B cell (primary cell): ENCODE measurements at regions of chr3 and their contacts with region 1.

Region 1: GRCh38 chr3:193665370-193665989 is 72.5 kb downstream of the OPA1 start:
- DNase-seq: peak; percentile 60
- ATAC-seq: no peak
- H3K4me3 ChIP-seq: no peak overlapping the region
- H3K4me3 Mint-ChIP-seq: no peak overlapping the region
- H3K27ac ChIP-seq: no peak overlapping the region
- H3K27ac Mint-ChIP-seq: no peak overlapping the region
- H3K4me1 ChIP-seq: no peaks in the 10 kb centered on the region
- H3K4me1 Mint-ChIP-seq: peaks cover 7% of the 10 kb centered on the region
- H3K27me3 ChIP-seq: no peaks in the 10 kb centered on the region
- H3K27me3 Mint-ChIP-seq: no peaks in the 10 kb centered on the region
- CTCF ChIP-seq: peak; percentile 86

Region 2: GRCh38 chr3:193780810-193781472 is 115.5 kb after region 1 on chr3:
- CTCF ChIA-PET with region 1: interaction called, 13 read pairs
- POLR2A ChIA-PET with region 1: no interaction called
- intact Hi-C with region 1: loop called (anchors 2 kb)
- DNase-seq: peak; percentile 63
- ATAC-seq: peak; percentile 45
- H3K4me3 ChIP-seq: no peak overlapping the region
- H3K4me3 Mint-ChIP-seq: no peak overlapping the region
- H3K27ac ChIP-seq: no peak overlapping the region
- H3K27ac Mint-ChIP-seq: no peak overlapping the region
- H3K4me1 ChIP-seq: peaks cover 12% of the 10 kb centered on the region in 2 donors
- H3K4me1 Mint-ChIP-seq: peaks cover 12% of the 10 kb centered on the region
- H3K27me3 ChIP-seq: peaks cover 0 to 61% (median 28%) of the 10 kb centered on the region in 4 experiments
- H3K27me3 Mint-ChIP-seq: peaks cover 59% of the 10 kb centered on the region
- CTCF ChIP-seq: peak; percentile 59

Region 3: GRCh38 chr3:193788189-193788991 is 122.9 kb after region 1 on chr3:
- CTCF ChIA-PET with region 1: interaction called, 12 read pairs
- POLR2A ChIA-PET with region 1: no interaction called
- intact Hi-C with region 1: no loop called
- DNase-seq: peak; percentile 79
- ATAC-seq: peak; percentile 88
- H3K4me3 ChIP-seq: no peak overlapping the region
- H3K4me3 Mint-ChIP-seq: no peak overlapping the region
- H3K27ac ChIP-seq: no peak overlapping the region
- H3K27ac Mint-ChIP-seq: peak overlapping the region; percentile 57
- H3K4me1 ChIP-seq: peaks cover 12 to 17% of the 10 kb centered on the region in 2 donors
- H3K4me1 Mint-ChIP-seq: peaks cover 14% of the 10 kb centered on the region
- H3K27me3 ChIP-seq: peaks cover 0 to 44% (median 5%) of the 10 kb centered on the region in 4 experiments
- H3K27me3 Mint-ChIP-seq: peaks cover 54% of the 10 kb centered on the region
- CTCF ChIP-seq: peak; percentile 82

Region 4: GRCh38 chr3:194141415-194142155 is 476.1 kb after region 1 on chr3:
- CTCF ChIA-PET with region 1: interaction called, 121 read pairs
- POLR2A ChIA-PET with region 1: no interaction called
- intact Hi-C with region 1: loop called (anchors 1 kb)
- DNase-seq: peak; percentile 75
- ATAC-seq: peak; percentile 20
- H3K4me3 ChIP-seq: peak overlapping the region in 4 of 5 experiments; percentile 2 to 52 (median 52)
- H3K4me3 Mint-ChIP-seq: peak overlapping the region; percentile 75
- H3K27ac ChIP-seq: peak overlapping the region in 1 of 2 donors; percentile 27
- H3K27ac Mint-ChIP-seq: peak overlapping the region; percentile 27
- H3K4me1 ChIP-seq: peaks cover 34 to 44% of the 10 kb centered on the region in 2 donors
- H3K4me1 Mint-ChIP-seq: peaks cover 37% of the 10 kb centered on the region
- H3K27me3 ChIP-seq: peaks cover 0 to 20% (median 4%) of the 10 kb centered on the region in 4 experiments
- H3K27me3 Mint-ChIP-seq: peaks cover 5% of the 10 kb centered on the region
- CTCF ChIP-seq: no peak

Region 5: DNA sequence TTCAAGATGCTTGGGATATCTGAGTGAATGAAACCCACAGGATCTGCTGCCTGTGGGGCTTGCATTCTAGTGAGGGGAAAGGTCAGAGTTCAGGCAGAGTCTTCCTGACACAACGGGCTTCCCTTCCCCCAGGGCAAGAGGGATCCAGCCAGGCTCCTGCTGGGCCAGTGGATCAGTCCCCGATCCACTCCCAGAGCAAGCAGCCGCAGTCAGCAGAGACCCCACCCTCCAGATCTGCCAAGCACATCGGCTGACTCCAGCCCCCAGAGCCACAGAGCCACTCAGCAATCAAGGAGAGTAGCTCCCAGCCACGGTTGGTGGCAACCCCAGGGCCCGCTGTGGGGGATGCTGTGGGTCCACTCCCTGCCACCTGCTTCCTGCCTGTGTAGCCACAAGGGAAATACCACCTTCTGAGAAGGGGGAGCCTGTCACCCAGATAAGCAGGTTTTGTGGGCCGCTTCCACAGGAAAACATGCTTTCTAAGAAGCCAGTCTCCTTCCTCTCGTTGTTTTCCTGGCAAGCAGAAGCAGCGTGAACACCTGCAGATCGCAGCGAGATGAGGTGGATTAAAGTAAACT is 640.7 kb after region 1 on chr3:
- CTCF ChIA-PET with region 1: interaction called, 16 read pairs
- POLR2A ChIA-PET with region 1: no interaction called
- intact Hi-C with region 1: no loop called
- DNase-seq: peak; percentile 89
- ATAC-seq: peak; percentile 63
- H3K4me3 ChIP-seq: peak overlapping the region in 3 of 5 experiments; percentile 7 to 57 (median 27)
- H3K4me3 Mint-ChIP-seq: peak overlapping the region; percentile 71
- H3K27ac ChIP-seq: peak overlapping the region; percentile 95 to 98
- H3K27ac Mint-ChIP-seq: peak overlapping the region; percentile 91
- H3K4me1 ChIP-seq: peaks cover 50 to 61% of the 10 kb centered on the region in 2 donors
- H3K4me1 Mint-ChIP-seq: peaks cover 51% of the 10 kb centered on the region
- H3K27me3 ChIP-seq: peaks cover 0 to 5% (median 2%) of the 10 kb centered on the region in 4 experiments
- H3K27me3 Mint-ChIP-seq: peaks cover 5% of the 10 kb centered on the region
- CTCF ChIP-seq: no peak

Region 6: DNA sequence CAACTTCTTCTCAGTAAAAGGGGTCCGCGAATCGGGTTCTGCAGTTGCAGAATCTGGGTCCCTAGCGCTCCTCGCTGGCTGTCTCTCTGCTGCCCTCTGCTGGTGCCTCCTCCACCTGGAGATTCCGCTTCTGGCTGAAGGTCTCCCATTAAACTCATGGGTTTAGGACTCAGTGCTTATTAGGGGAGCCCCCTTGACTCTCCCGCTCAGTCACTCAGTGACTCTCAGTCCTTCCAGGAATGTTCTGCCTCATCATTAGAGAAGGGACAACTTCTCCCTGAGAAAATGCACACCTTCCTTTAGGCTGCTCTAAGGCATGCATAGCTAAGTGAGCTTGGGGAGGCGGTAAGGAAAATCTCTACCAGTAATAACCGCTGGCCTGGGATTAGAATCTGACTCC is 678.5 kb after region 1 on chr3:
- CTCF ChIA-PET with region 1: interaction called, 34 read pairs
- POLR2A ChIA-PET with region 1: no interaction called
- intact Hi-C with region 1: loop called (anchors 2 kb)
- DNase-seq: peak; percentile 78
- ATAC-seq: peak; percentile 61
- H3K4me3 ChIP-seq: no peak overlapping the region
- H3K4me3 Mint-ChIP-seq: no peak overlapping the region
- H3K27ac ChIP-seq: no peak overlapping the region
- H3K27ac Mint-ChIP-seq: no peak overlapping the region
- H3K4me1 ChIP-seq: peaks cover 0 to 3% of the 10 kb centered on the region in 2 donors
- H3K4me1 Mint-ChIP-seq: peaks cover 8% of the 10 kb centered on the region
- H3K27me3 ChIP-seq: peaks cover 0 to 17% (median 0%) of the 10 kb centered on the region in 4 experiments
- H3K27me3 Mint-ChIP-seq: peaks cover 25% of the 10 kb centered on the region
- CTCF ChIP-seq: peak; percentile 98